Activated naive CD4-positive, alpha-beta T cell treated with anti-CD3 and anti-CD28 coated beads for 36 hours (primary cell): ENCODE measurements at regions of chr3 and their contacts with region 1.

Region 1: DNA sequence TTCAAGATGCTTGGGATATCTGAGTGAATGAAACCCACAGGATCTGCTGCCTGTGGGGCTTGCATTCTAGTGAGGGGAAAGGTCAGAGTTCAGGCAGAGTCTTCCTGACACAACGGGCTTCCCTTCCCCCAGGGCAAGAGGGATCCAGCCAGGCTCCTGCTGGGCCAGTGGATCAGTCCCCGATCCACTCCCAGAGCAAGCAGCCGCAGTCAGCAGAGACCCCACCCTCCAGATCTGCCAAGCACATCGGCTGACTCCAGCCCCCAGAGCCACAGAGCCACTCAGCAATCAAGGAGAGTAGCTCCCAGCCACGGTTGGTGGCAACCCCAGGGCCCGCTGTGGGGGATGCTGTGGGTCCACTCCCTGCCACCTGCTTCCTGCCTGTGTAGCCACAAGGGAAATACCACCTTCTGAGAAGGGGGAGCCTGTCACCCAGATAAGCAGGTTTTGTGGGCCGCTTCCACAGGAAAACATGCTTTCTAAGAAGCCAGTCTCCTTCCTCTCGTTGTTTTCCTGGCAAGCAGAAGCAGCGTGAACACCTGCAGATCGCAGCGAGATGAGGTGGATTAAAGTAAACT is 44.9 kb downstream of the CPN2 start:
- DNase-seq: peak; percentile 83
- H3K4me3 Mint-ChIP-seq: no peak overlapping the region
- H3K27ac Mint-ChIP-seq: peak overlapping the region; percentile 94
- H3K4me1 Mint-ChIP-seq: peaks cover 37% of the 10 kb centered on the region
- H3K27me3 Mint-ChIP-seq: no peaks in the 10 kb centered on the region

Region 2: GRCh38 chr3:193592944-193593667 is 713.1 kb before region 1 on chr3 and contains the start of gene OPA1:
- CTCF ChIA-PET with region 1: no interaction called
- intact Hi-C with region 1: loop called (anchors 2 kb)
- DNase-seq: peak; percentile 96
- H3K4me3 Mint-ChIP-seq: peak within 1 kb of the TSS; percentile 93
- H3K27ac Mint-ChIP-seq: peak within 1 kb of the TSS; percentile 98
- H3K4me1 Mint-ChIP-seq: peaks cover 46% of the 10 kb centered on the region
- H3K27me3 Mint-ChIP-seq: no peaks in the 10 kb centered on the region
- total RNA-seq, gene OPA1: 91.7 to 96.0 TPM

Region 3: GRCh38 chr3:193963808-193964516 is 342.2 kb before region 1 on chr3:
- CTCF ChIA-PET with region 1: no interaction called
- intact Hi-C with region 1: loop called (anchors 1 kb)
- DNase-seq: peak; percentile 46
- H3K4me3 Mint-ChIP-seq: no peak overlapping the region
- H3K27ac Mint-ChIP-seq: peak overlapping the region; percentile 58
- H3K4me1 Mint-ChIP-seq: peaks cover 19% of the 10 kb centered on the region
- H3K27me3 Mint-ChIP-seq: peaks cover 37% of the 10 kb centered on the region

Region 4: DNA sequence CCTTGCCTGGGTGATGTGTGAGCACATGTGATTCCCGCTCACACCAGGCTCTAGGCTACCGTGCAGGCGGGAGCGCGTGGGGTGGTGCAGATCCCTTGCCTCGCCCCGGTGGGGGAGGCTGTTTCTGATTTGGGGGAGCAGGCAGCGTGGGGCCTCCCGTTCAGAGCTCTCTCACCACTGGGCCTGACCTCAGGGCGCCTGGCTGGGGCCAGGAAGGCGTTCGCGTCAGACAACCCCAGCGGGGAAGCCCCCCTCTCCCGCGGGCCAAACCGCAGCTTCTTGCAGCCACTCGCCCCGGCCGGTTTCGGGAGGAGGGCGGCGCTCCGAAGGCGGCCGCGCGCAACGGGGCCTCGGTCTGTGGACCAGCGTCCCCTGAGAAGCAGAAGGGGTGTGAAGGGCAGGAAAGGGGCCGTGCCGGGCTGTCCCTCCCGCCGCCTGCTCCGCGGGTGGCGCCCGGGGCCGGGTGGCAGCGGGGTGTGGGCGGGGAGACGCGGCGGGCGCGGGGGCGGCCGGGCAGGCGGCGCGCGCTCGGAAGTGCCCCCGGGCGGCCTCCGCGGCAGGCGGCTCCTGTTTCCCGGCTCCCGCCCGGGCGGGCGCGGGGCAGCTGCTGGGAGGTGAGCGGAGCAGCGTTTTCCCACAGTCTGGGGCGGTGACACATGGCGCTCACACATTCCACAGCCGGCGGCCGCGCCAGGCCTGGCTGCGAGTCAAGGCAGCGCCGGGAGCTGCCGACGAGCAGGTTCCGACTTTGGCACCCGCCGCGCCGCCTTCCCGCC is 235.4 kb before region 1 on chr3:
- CTCF ChIA-PET with region 1: no interaction called
- intact Hi-C with region 1: loop called (anchors 2 kb)
- DNase-seq: peak; percentile 88
- H3K4me3 Mint-ChIP-seq: peak overlapping the region; percentile 57
- H3K27ac Mint-ChIP-seq: no peak overlapping the region
- H3K4me1 Mint-ChIP-seq: peaks cover 22% of the 10 kb centered on the region
- H3K27me3 Mint-ChIP-seq: peaks cover 19% of the 10 kb centered on the region

Region 5: GRCh38 chr3:194203482-194204041 is 102.6 kb before region 1 on chr3:
- CTCF ChIA-PET with region 1: no interaction called
- intact Hi-C with region 1: loop called (anchors 1 kb)
- DNase-seq: peak; percentile 62
- H3K4me3 Mint-ChIP-seq: peak overlapping the region; percentile 71
- H3K27ac Mint-ChIP-seq: peak overlapping the region; percentile 57
- H3K4me1 Mint-ChIP-seq: peaks cover 18% of the 10 kb centered on the region
- H3K27me3 Mint-ChIP-seq: peaks cover 14% of the 10 kb centered on the region

Region 6: DNA sequence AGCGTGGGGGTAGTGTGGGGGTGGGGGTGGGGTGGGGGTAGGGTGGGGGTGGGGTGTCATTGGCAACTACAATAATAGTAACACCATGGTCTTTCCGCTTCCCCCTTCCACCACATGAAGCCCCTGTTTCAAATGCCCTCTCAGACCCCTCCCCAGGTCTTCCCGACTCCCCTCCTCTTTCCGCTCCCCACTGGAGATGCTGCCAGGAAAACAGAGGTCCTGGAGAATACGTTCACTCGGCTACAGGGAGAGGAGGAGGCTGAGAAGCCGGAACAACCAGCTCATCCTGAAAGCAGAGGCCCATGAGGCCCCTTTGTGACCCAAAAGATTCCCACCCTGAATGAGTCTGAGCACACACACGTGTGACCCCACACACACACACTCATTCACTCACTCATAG is 30.5 kb before region 1 on chr3:
- CTCF ChIA-PET with region 1: no interaction called
- intact Hi-C with region 1: loop called (anchors 1 kb)
- DNase-seq: no peak
- H3K4me3 Mint-ChIP-seq: no peak overlapping the region
- H3K27ac Mint-ChIP-seq: no peak overlapping the region
- H3K4me1 Mint-ChIP-seq: peaks cover 4% of the 10 kb centered on the region
- H3K27me3 Mint-ChIP-seq: no peaks in the 10 kb centered on the region

Region 7: GRCh38 chr3:194486540-194487288 is 180.5 kb after region 1 on chr3 and contains the start of gene ATP13A3:
- CTCF ChIA-PET with region 1: no interaction called
- intact Hi-C with region 1: loop called (anchors 1 kb)
- DNase-seq: peak; percentile 86
- H3K4me3 Mint-ChIP-seq: peak within 1 kb of the TSS; percentile 91
- H3K27ac Mint-ChIP-seq: peak within 1 kb of the TSS; percentile 94
- H3K4me1 Mint-ChIP-seq: peaks cover 59% of the 10 kb centered on the region
- H3K27me3 Mint-ChIP-seq: no peaks in the 10 kb centered on the region
- total RNA-seq, gene ATP13A3: 88.4 to 92.3 TPM

Region 8: GRCh38 chr3:195129644-195130492 is 823.7 kb after region 1 on chr3:
- CTCF ChIA-PET with region 1: no interaction called
- intact Hi-C with region 1: no loop called
- DNase-seq: peak; percentile 49
- H3K4me3 Mint-ChIP-seq: no peak overlapping the region
- H3K27ac Mint-ChIP-seq: no peak overlapping the region
- H3K4me1 Mint-ChIP-seq: peaks cover 23% of the 10 kb centered on the region
- H3K27me3 Mint-ChIP-seq: no peaks in the 10 kb centered on the region